ENCODE measurements at regions of chr16 and their contacts with region 1.

Region 1: DNA sequence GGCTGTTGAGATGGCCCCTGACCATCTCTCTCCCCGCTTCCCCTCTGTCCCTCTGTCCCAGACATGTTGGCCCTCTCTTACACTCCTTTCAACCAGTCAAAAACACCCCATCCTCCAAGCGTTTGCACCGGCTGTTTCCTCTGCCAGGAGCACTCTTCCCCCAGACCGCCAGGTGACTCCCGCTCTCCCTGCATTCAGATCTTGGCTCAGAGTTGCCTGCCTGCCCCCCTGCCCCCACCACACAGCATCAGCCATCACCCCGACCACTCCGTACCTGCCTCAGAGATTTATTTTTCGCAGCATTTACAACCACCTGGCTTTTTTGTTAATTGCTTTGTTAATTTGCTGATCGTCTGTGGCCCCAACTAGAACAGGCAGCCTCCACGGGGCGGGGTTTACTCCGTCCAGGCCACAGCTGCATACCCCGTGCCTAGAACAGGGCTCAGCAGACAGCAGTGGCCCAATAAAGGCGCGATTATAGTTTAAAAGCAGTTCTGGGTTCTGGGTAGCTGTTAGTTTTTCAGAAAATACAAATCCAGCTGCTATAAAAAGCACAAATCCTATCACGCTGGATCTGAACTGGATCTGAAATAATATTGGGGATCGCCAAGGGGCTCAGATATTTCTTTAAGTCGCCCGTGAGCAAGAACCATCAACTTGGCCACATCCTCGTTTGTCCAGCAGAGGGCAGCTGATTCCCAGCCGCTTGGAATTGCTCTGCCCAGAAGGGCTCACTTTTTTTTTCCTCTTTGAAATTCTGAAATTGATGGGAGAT is 173.6 kb downstream of the IRF8 start:
- DNase-seq: peak; percentile 77
- H3K4me3 ChIP-seq: no peak overlapping the region
- H3K27ac ChIP-seq: no peak overlapping the region
- H3K27me3 ChIP-seq: no peaks in the 10 kb centered on the region
- CTCF ChIP-seq: peak; percentile 81

Region 2: GRCh38 chr16:85978291-85978775 is 94.2 kb before region 1 on chr16:
- CTCF ChIA-PET with region 1: no interaction called
- POLR2A ChIA-PET with region 1: no interaction called
- DNase-seq: no peak
- H3K4me3 ChIP-seq: no peak overlapping the region
- H3K27ac ChIP-seq: no peak overlapping the region
- H3K27me3 ChIP-seq: peaks cover 31% of the 10 kb centered on the region
- CTCF ChIP-seq: no peak

Region 3: DNA sequence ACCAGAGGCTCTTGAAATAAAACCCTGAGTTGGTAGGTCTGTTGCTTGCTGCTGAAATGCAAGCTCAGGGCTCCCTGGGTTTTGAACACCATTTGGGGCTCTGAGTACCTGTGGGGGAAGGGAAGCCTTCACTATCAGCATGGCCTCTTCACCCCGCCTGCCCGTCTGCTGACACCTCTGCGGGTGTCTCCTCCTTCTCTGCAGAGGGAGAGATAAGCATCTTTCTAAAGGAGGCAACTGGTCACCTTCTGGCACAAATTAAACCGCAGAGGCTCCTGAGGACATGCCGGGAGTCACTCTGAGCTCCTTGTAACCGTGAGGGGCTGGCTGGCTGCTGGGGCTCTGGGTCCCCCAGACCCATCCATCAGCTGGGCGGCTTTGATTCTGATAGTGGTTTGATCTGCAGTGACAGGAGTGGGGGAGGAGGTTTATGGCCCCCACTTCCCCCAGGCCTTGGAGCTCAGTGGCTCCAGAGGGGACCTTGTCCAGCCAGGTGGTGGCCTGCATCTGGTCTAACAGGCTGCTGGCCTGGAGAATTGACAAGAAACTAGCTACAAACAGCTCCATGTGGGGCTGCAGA is 50.0 kb before region 1 on chr16:
- CTCF ChIA-PET with region 1: no interaction called
- POLR2A ChIA-PET with region 1: interaction called, 10 read pairs
- DNase-seq: no peak
- H3K4me3 ChIP-seq: no peak overlapping the region
- H3K27ac ChIP-seq: no peak overlapping the region
- H3K27me3 ChIP-seq: peaks cover 41% of the 10 kb centered on the region
- CTCF ChIP-seq: no peak

Region 4: DNA sequence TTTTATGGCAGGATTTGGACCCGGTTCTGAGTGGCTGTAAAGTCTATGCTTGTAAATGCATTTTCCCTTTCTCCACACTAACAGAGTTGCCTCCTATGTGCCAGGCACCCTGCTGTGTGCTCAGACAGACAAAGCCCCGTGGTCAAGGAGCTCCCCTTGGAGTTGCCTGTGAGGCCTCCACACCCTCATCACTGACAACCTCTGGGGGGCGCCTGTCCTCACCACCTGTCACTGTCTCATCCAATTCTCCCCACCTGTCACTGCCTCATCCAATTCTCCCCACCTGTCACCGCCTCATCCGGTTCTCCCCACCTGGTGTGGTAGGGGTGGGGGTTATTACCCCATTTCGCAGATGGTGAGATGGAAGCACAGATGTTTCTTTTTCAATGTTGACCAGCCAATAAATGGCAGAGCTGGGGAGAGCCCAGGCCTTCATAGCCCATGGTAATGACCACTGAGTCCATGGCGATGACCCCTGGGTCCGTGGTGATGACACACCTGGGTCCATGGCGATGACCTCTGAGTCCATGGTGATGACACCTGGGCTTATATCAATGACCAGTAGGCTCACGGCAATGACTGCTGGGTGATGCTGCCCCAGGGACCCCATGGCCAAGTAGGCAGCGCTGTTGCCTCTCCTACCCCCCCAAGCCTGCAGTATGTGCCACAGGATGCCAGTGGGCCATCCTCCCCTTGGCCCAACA is 23.5 kb before region 1 on chr16:
- CTCF ChIA-PET with region 1: interaction called, 12 read pairs
- POLR2A ChIA-PET with region 1: no interaction called
- DNase-seq: no peak
- H3K4me3 ChIP-seq: no peak overlapping the region
- H3K27ac ChIP-seq: no peak overlapping the region
- H3K27me3 ChIP-seq: peaks cover 49% of the 10 kb centered on the region
- CTCF ChIP-seq: no peak

Region 5: GRCh38 chr16:86118467-86119307 is 46.2 kb after region 1 on chr16:
- CTCF ChIA-PET with region 1: no interaction called
- POLR2A ChIA-PET with region 1: no interaction called
- DNase-seq: no peak
- H3K4me3 ChIP-seq: no peak overlapping the region
- H3K27ac ChIP-seq: no peak overlapping the region
- H3K27me3 ChIP-seq: peaks cover 14% of the 10 kb centered on the region
- CTCF ChIP-seq: no peak

Region 6: GRCh38 chr16:86176454-86176853 is 103.9 kb after region 1 on chr16:
- CTCF ChIA-PET with region 1: no interaction called
- POLR2A ChIA-PET with region 1: no interaction called
- DNase-seq: no peak
- H3K4me3 ChIP-seq: no peak overlapping the region
- H3K27ac ChIP-seq: no peak overlapping the region
- H3K27me3 ChIP-seq: peaks cover 2% of the 10 kb centered on the region
- CTCF ChIP-seq: no peak

Region 7: GRCh38 chr16:86199871-86200695 is 127.6 kb after region 1 on chr16:
- CTCF ChIA-PET with region 1: interaction called, 15 read pairs
- POLR2A ChIA-PET with region 1: no interaction called
- DNase-seq: peak; percentile 90
- H3K4me3 ChIP-seq: peak overlapping the region; percentile 48
- H3K27ac ChIP-seq: peak overlapping the region; percentile 96
- H3K27me3 ChIP-seq: no peaks in the 10 kb centered on the region
- CTCF ChIP-seq: no peak

Region 8: DNA sequence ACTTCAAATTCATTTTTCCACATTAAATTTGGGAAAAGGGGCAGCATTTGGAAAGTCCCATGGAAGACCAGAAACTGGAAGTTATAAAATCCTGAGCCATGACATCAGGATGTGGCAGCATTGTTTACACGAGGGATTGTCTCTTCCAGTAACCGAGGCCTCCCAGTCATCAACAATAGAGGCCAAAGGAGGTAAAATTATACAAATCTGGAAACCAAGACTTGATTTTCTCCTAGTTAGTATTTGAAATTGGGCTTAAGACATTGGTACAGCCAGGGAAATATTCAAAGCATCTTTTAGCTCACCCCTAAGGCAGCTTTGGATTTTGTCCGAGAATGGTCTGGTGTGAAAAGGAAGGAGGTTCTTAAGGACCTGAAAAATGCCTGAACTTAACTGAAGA is 186.2 kb after region 1 on chr16:
- CTCF ChIA-PET with region 1: interaction called, 12 read pairs
- POLR2A ChIA-PET with region 1: no interaction called
- DNase-seq: peak; percentile 68
- H3K4me3 ChIP-seq: no peak overlapping the region
- H3K27ac ChIP-seq: peak overlapping the region; percentile 94
- H3K27me3 ChIP-seq: no peaks in the 10 kb centered on the region
- CTCF ChIP-seq: no peak

Region 9: DNA sequence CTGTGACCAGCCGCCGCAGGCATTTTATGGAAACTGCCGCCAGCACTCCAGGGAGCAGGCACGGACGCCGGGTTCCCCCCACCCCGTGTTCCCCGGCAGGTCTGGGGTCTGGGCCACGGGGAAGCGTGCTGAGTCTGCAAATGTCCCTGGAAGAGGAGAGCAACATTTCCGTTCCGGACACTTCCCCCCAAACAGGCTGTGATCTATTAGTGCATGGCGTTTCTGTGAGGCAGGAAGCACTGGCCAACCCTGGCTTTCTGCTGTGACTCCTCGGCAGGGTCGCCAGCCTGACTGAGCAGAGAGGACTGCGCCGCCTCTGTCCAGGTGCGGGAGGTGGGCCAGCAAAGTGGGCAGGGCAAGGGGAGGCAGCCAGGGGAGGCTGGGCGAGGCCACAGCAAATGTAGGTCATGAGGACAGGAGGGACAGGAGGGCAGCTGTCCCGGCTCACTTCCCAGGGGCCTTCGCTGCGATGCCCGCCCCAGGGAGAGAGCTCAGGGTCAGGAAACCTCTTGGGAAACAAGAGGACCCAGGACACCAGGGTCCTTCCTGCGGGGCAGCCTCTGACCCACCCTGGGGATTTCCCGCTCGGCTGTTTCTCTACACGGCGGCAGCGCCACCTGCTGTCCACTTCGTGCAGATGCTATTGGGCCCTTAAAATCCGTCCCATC is 447.3 kb after region 1 on chr16:
- CTCF ChIA-PET with region 1: interaction called, 36 read pairs
- POLR2A ChIA-PET with region 1: interaction called, 5 read pairs
- DNase-seq: peak; percentile 51
- H3K4me3 ChIP-seq: peak overlapping the region; percentile 42
- H3K27ac ChIP-seq: peak overlapping the region; percentile 47
- H3K27me3 ChIP-seq: no peaks in the 10 kb centered on the region
- CTCF ChIP-seq: peak; percentile 92

Region 10: GRCh38 chr16:86531191-86531545 is 458.7 kb after region 1 on chr16:
- CTCF ChIA-PET with region 1: interaction called, 12 read pairs
- POLR2A ChIA-PET with region 1: no interaction called
- DNase-seq: no peak
- H3K4me3 ChIP-seq: no peak overlapping the region
- H3K27ac ChIP-seq: peak overlapping the region; percentile 11
- H3K27me3 ChIP-seq: no peaks in the 10 kb centered on the region
- CTCF ChIP-seq: no peak

Measured in AG04450 (cell line).